ENCODE measurements at regions of chr20 and their contacts with region 1.

Region 1: GRCh38 chr20:23937303-23938117 is 51.1 kb downstream of the GGTLC1 start:
- DNase-seq: peak in 1 of 2 donors; percentile 24
- H3K4me3 ChIP-seq: no peak overlapping the region
- H3K27ac ChIP-seq: no peak overlapping the region
- H3K4me1 ChIP-seq: no peaks in the 10 kb centered on the region
- H3K27me3 ChIP-seq: peaks cover 0 to 3% of the 10 kb centered on the region in 2 donors
- CTCF ChIP-seq: peak; percentile 30 to 65 (median 59)
- POLR2A ChIP-seq: no peak

Region 2: DNA sequence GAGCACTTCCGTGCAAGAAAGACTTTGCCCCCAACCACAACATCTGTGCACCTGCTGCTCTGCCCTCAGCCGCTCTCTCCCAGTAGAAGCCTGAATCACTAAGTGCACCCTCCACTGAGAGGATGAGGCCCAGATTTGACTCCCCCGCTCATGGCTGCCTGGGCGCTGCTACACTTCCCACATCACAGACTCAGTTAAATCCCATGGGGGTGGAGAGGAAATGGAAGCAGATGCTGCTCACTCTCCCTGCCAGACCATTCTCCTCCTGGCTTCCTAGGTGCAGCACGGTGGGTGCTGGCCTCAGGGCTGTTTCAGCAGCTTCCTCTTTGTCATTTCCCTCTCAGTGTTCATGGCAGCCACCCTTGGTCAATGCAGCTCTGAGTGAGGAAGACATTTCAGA is 62.8 kb before region 1 on chr20:
- intact Hi-C with region 1: no loop called
- DNase-seq: no peak
- H3K4me3 ChIP-seq: no peak overlapping the region
- H3K27ac ChIP-seq: no peak overlapping the region
- H3K4me1 ChIP-seq: no peaks in the 10 kb centered on the region
- H3K27me3 ChIP-seq: peaks cover 0 to 8% of the 10 kb centered on the region in 2 donors
- CTCF ChIP-seq: no peak
- POLR2A ChIP-seq: no peak

Region 3: GRCh38 chr20:24528583-24529368 is 591.3 kb after region 1 on chr20:
- intact Hi-C with region 1: loop called (anchors 5 kb)
- DNase-seq: no peak
- H3K4me3 ChIP-seq: no peak overlapping the region
- H3K27ac ChIP-seq: no peak overlapping the region
- H3K4me1 ChIP-seq: no peaks in the 10 kb centered on the region
- H3K27me3 ChIP-seq: no peaks in the 10 kb centered on the region
- CTCF ChIP-seq: no peak
- POLR2A ChIP-seq: no peak